Ascending aorta (tissue), 2 donors: ENCODE measurements at regions of chr16 and their contacts with region 1.

Region 1: GRCh38 chr16:87492721-87493607 is at the start of gene ZCCHC14:
- DNase-seq: peak; percentile 96 to 99
- H3K4me3 ChIP-seq: peak within 1 kb of the TSS; percentile 57 to 90
- H3K27ac ChIP-seq: peak within 1 kb of the TSS; percentile 21 to 72
- H3K4me1 ChIP-seq: peaks cover 8 to 22% of the 10 kb centered on the region in 2 donors
- H3K27me3 ChIP-seq: no peaks in the 10 kb centered on the region
- CTCF ChIP-seq: peak in 1 of 3 experiments; percentile 22
- total RNA-seq, gene ZCCHC14: 131 TPM

Region 2: DNA sequence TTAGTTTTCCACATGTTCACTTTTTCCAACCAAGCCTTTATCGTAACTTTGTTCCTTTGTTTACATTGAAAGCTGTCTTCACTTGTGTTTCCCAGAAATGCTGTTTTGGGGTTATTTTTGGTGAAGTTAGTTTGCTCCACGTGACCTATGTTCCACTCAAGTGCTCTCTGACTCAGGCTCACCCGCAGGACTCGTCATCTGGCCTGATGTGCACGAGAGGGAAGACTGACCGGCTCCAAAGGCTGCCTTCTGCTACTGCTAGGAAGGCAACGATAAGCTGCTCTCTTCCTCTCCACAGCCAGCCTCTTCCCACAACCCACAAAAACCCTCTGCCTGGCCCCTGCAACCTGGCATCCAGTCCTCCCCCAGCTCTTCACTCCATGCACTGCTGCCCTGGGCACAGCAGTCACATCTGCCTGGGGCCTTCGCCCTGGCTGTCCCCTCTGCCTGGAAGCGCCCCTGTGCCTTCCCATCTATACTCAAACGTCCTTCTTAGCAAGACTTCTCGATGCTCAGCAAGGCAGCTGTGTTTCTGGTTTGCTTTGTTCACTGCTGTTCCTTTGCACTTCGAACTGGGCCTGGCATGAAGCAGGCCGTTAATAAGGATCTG is 28.2 kb before region 1 on chr16:
- intact Hi-C with region 1: loop called (anchors 1 kb)
- DNase-seq: peak; percentile 85 to 95
- H3K4me3 ChIP-seq: peak overlapping the region; percentile 3 to 55
- H3K27ac ChIP-seq: peak overlapping the region; percentile 74 to 90
- H3K4me1 ChIP-seq: peaks cover 23 to 43% of the 10 kb centered on the region in 2 donors
- H3K27me3 ChIP-seq: no peaks in the 10 kb centered on the region
- CTCF ChIP-seq: no peak

Region 3: DNA sequence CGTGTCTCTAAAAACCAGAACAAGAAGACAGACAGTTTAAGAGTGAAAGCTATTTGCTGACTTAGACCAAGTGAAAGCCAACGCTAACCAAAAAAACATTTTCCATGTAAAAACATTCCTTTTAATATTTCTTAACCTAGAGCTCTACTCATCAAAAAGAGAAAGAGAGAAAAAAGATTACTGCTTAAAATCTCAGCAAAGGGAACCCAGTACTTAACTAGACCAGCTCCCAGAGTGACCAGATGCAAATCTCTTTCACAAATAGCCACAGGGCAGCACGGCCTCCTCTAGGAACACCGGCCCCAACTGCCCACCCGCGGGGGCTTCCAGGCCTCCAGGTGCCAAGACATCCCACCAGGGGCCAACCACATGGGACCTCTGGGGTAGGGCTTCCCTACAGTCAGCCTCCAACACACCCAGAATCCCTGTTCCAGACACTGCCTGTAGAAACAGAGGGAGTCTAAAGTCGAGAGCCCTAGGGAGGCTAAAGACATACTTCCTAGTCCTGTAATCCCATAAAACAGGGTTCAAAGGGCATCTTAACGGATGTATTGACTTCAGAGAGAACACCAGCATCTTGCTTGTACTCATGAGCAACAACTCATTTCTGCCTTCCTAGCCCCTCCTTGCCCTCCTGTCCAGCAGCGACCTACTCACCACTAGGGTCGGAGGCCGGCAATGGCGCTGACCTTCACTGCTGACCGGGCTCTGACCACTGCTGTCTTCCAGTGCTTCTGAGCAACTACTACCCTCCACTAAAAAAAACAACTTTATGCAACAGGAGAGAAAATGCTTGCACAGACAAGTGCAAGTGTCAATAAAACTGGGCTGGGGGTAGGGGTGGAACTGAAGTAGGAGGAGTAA is 21.5 kb before region 1 on chr16:
- intact Hi-C with region 1: loop called (anchors 1 kb)
- DNase-seq: no peak
- H3K4me3 ChIP-seq: no peak overlapping the region
- H3K27ac ChIP-seq: peak overlapping the region in 1 of 2 donors; percentile 65
- H3K4me1 ChIP-seq: peaks cover 12 to 18% of the 10 kb centered on the region in 2 donors
- H3K27me3 ChIP-seq: no peaks in the 10 kb centered on the region
- CTCF ChIP-seq: no peak